Activated CD4-positive, alpha-beta memory T cell treated with anti-CD3 and anti-CD28 coated beads for 36 hours (primary cell): ENCODE measurements at regions of chr2 and their contacts with region 1.

Region 1: DNA sequence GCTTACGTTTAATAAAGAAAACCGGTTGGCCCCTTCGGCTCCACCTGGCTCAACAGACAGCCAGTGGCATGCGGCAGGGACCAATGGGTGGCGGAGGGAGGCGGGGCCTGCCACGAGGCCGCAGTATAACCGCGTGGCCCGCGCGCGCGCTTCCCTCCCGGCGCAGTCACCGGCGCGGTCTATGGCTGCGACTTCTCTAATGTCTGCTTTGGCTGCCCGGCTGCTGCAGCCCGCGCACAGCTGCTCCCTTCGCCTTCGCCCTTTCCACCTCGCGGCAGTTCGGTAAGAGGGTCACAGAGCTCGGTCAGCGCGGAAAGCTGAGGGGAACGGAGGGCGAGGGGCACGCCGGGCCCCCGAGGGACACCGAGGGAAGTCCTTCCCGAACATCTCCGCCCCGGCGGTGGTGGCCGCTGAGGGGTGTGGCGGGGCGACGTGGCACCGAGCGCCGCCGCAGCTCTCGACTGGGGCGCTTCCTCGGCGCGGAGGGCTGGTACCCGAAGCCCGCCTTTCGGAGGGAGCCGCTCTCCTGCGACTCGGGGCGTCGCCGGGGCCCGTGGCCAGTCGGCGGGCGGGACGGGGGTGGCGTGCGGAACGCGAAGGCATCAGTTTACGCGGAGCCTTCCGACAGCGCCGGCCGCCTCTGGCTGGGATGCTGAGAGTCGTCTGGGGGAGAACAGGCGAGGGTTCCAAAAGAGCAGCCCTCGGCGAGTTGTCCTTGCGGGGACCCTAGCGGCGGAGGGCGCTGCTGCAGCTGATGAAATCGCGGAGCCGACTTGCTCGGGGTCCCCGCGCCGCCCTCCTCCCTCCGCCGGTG is at the start of gene MTHFD2:
- DNase-seq: peak; percentile 95
- H3K4me3 Mint-ChIP-seq: peak within 1 kb of the TSS; percentile 99
- H3K27ac Mint-ChIP-seq: peak within 1 kb of the TSS; percentile 100
- H3K4me1 Mint-ChIP-seq: peaks cover 39% of the 10 kb centered on the region
- H3K27me3 Mint-ChIP-seq: peaks cover 2% of the 10 kb centered on the region
- total RNA-seq, gene MTHFD2: 518 to 525 TPM

Region 2: GRCh38 chr2:73979686-73980085 is 219.0 kb before region 1 on chr2:
- CTCF ChIA-PET with region 1: no interaction called
- POLR2A ChIA-PET with region 1: no interaction called
- intact Hi-C with region 1: loop called (anchors 2 kb)
- DNase-seq: peak; percentile 33
- H3K4me3 Mint-ChIP-seq: peak overlapping the region; percentile 53
- H3K27ac Mint-ChIP-seq: peak overlapping the region; percentile 78
- H3K4me1 Mint-ChIP-seq: peaks cover 62% of the 10 kb centered on the region
- H3K27me3 Mint-ChIP-seq: no peaks in the 10 kb centered on the region

Region 3: DNA sequence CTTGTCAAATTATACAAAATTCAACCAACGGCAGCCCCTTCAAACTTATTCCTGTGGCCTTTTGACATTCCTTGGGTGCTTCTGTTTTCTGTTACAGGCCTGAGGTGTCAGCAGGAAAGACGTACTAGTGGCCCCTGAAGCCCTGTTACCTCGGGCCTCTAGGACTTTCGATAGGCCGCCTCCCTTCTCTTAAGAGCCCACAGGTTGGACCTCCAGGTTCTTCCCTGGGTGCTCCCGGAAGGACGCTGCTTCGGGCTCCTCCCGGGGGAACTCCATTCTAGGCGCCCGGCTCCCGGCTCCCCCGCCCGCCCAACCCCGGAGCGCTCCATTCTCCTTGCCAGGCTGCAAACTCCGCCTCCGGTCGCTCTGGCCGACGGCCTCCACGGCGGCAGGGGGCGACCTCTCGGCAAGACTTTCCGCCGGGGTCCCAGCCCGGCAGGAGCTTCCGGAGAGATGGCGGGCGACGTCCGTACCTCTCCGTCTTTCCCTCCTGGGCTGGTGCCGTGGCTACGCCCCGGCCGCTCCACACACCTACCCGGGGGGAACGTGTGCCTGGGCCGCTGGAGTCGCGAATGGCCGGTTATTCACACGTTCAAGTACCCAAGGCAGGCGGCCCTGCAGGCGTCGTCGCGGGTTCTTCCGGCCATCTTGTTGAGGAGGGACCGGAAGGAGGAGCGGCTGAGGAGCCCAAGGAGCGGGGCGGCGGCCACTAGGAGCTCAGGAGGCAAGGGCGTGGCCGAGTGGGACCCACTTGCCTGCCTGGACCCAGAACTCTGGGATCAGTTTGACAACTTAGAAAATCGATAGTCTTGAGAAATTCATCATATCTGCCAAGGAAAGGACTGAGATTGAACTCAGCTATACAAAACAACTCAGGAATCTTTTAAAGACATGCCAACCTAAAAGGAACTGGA is 78.5 kb before region 1 on chr2:
- CTCF ChIA-PET with region 1: no interaction called
- POLR2A ChIA-PET with region 1: interaction called, 3 read pairs
- intact Hi-C with region 1: loop called (anchors 1 kb)
- DNase-seq: peak; percentile 91
- H3K4me3 Mint-ChIP-seq: peak overlapping the region; percentile 84
- H3K27ac Mint-ChIP-seq: peak overlapping the region; percentile 88
- H3K4me1 Mint-ChIP-seq: peaks cover 8% of the 10 kb centered on the region
- H3K27me3 Mint-ChIP-seq: no peaks in the 10 kb centered on the region

Region 4: DNA sequence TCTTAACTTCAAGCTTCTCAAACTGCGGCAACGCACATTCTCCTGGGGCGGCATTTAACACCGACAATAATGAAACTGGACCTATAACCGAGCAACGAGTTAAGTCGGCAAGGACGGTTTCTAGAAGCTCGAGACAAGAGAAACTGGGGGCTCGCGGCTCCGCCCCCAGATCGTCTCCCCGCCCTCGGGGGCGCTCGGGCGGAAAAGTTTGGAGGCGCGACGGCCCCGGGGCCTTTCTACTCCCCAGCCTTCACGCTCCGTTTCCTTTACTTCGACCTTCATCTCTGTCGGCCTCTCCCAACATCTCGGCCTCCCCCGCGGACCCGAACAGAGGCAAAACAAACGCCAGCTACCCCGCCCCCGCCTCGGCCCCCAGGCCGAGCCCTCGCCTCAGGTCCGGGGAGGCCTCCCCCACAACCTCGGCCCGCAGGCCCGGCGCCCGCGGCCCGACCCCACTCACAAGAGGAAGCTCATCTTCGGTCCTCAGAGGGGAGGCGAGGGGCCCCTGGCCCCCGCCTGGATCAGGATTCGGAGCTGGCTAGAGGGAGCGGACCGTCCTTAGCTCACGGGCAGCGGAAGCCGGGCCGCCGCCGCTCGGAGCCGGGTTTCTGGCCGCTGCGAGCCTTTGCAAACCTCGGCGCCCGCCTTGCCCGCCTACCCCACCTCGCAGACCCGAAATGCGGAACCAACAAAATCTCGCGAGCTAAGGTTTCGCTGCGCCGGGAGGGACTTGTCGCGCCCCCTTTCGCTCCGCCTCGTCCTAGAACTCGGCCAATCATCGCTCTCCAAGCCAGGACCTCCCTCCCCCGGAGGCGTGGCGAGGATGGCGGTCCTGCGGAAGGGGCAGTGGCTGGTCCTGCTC is 20.2 kb before region 1 on chr2 and contains the start of gene MOB1A:
- CTCF ChIA-PET with region 1: interaction called, 42 read pairs
- POLR2A ChIA-PET with region 1: interaction called, 124 read pairs
- intact Hi-C with region 1: loop called (anchors 1 kb)
- DNase-seq: peak; percentile 99
- H3K4me3 Mint-ChIP-seq: peak within 1 kb of the TSS; percentile 83
- H3K27ac Mint-ChIP-seq: peak within 1 kb of the TSS; percentile 76
- H3K4me1 Mint-ChIP-seq: peaks cover 45% of the 10 kb centered on the region
- H3K27me3 Mint-ChIP-seq: no peaks in the 10 kb centered on the region
- total RNA-seq, gene MOB1A: 159 to 170 TPM

Region 5: DNA sequence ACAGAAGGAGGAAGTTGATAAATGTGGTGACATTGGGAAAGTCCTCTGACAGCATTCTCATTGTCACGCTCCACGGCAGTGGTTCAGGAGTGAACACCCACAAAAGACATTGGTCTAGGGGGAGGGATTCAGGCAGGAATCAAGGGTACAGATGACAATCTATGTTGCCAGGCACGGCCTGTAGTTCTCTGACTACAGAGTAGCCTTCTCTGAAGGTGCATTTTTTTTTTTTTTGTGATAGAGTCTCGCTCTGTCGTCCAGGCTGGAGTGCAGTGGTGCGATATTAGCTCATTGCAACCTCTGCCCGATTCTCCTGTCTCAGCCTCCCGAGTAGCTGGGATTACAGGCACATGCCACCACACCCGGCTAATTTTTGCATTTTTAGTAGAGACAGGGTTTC is 12.6 kb before region 1 on chr2:
- CTCF ChIA-PET with region 1: no interaction called
- POLR2A ChIA-PET with region 1: interaction called, 124 read pairs
- intact Hi-C with region 1: loop called (anchors 1 kb)
- DNase-seq: peak; percentile 77
- H3K4me3 Mint-ChIP-seq: no peak overlapping the region
- H3K27ac Mint-ChIP-seq: peak overlapping the region; percentile 78
- H3K4me1 Mint-ChIP-seq: peaks cover 16% of the 10 kb centered on the region
- H3K27me3 Mint-ChIP-seq: peaks cover under 1% of the 10 kb centered on the region

Region 6: GRCh38 chr2:74250189-74250631 is 51.5 kb after region 1 on chr2:
- CTCF ChIA-PET with region 1: no interaction called
- POLR2A ChIA-PET with region 1: no interaction called
- intact Hi-C with region 1: no loop called
- DNase-seq: peak; percentile 67
- H3K4me3 Mint-ChIP-seq: no peak overlapping the region
- H3K27ac Mint-ChIP-seq: no peak overlapping the region
- H3K4me1 Mint-ChIP-seq: no peaks in the 10 kb centered on the region
- H3K27me3 Mint-ChIP-seq: no peaks in the 10 kb centered on the region